Caco-2 (cell line): ENCODE measurements at regions of chr19 and their contacts with region 1.

Region 1: DNA sequence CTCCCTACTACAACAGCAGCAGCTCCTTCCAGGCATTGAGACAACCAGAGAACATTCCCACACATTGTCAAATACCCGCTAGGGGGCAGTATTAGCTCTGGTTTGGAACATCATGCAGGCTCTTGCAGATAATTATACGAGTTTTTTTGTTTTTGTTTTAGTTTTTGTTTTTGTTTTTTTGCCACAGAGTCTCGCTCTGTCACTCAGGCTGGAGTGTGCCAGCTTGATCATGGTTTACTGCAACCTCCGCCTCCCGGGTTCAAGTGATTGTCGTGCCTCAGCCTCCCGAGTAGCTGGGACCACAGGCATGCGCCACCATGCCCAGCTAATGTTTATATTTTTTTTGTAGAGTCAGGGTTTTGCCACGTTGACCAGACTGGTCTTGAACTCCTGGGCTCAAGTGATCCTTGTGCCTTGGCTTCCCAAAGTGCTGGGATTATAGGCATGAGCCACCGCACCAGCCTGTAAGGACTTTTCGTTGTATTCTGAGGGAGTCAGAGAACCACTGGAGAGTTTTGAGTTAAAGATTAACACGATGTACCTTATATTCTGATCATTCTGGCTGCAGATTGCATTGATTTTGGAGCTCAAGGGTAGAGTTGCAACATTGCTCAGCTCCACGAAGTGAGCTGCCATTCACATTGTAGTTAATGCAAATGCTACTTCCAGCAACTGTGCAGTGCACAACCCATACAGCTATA is 41.7 kb upstream of the CEACAM20 start:
- DNase-seq: peak; percentile 73 to 83
- H3K4me3 ChIP-seq: no peak overlapping the region
- H3K4me3 Mint-ChIP-seq: no peak overlapping the region
- H3K27ac Mint-ChIP-seq: no peak overlapping the region
- H3K4me1 ChIP-seq: peaks cover 40% of the 10 kb centered on the region
- H3K4me1 Mint-ChIP-seq: peaks cover 43% of the 10 kb centered on the region
- H3K27me3 ChIP-seq: no peaks in the 10 kb centered on the region
- H3K27me3 Mint-ChIP-seq: no peaks in the 10 kb centered on the region
- CTCF ChIP-seq: peak; percentile 57 to 70

Region 2: DNA sequence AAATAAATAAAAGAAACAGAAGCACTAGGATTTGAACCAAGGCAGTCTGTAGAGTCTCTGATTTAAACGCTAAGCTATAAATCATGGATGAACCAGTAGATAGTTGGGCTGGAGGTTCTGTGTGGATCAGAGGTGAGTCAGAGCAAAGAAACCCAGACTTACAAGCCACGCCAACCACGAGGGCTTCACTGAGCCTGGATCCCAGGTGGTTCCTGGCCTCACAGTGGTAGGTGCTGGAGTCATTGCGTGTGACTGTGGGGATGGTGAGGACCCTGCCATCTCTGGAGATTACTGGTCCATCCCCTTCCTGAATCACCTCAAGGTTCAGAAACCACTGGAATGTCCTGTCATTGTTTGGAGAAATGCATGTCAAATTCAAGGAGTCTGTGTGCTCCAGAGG is 22.4 kb before region 1 on chr19:
- CTCF ChIA-PET with region 1: no interaction called
- POLR2A ChIA-PET with region 1: no interaction called
- intact Hi-C with region 1: no loop called
- DNase-seq: no peak
- H3K4me3 ChIP-seq: no peak overlapping the region
- H3K4me3 Mint-ChIP-seq: no peak overlapping the region
- H3K27ac Mint-ChIP-seq: no peak overlapping the region
- H3K4me1 ChIP-seq: no peaks in the 10 kb centered on the region
- H3K4me1 Mint-ChIP-seq: peaks cover 19% of the 10 kb centered on the region
- H3K27me3 ChIP-seq: no peaks in the 10 kb centered on the region
- H3K27me3 Mint-ChIP-seq: no peaks in the 10 kb centered on the region
- CTCF ChIP-seq: no peak

Region 3: GRCh38 chr19:44582581-44583265 is 11.6 kb after region 1 on chr19:
- CTCF ChIA-PET with region 1: interaction called, 20 read pairs
- POLR2A ChIA-PET with region 1: no interaction called
- intact Hi-C with region 1: no loop called
- DNase-seq: no peak
- H3K4me3 ChIP-seq: no peak overlapping the region
- H3K4me3 Mint-ChIP-seq: no peak overlapping the region
- H3K27ac Mint-ChIP-seq: no peak overlapping the region
- H3K4me1 ChIP-seq: peaks cover 7% of the 10 kb centered on the region
- H3K4me1 Mint-ChIP-seq: peaks cover 30% of the 10 kb centered on the region
- H3K27me3 ChIP-seq: no peaks in the 10 kb centered on the region
- H3K27me3 Mint-ChIP-seq: no peaks in the 10 kb centered on the region
- CTCF ChIP-seq: peak in 1 of 2 experiments; percentile 53

Region 4: DNA sequence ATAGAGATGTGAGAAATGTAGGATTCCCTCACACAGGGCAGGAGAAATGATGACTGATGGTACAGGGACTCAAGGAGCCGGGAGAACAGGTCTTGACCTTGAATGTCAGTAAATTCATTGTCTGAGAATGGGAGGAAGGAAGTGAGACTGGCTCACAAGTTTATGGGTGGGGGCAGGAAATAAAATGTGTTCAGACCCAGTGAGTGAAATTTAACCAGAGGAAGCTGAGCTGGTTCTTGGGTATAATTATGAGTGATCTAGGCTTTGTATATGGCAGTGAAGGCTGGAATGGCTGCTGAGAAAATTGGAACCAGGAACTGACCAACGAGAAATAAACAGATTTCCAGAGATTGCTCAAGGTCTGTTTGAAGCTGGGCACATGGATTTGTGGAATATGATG is 35.9 kb after region 1 on chr19:
- CTCF ChIA-PET with region 1: interaction called, 16 read pairs
- POLR2A ChIA-PET with region 1: no interaction called
- intact Hi-C with region 1: loop called (anchors 5 kb)
- DNase-seq: no peak
- H3K4me3 ChIP-seq: no peak overlapping the region
- H3K4me3 Mint-ChIP-seq: no peak overlapping the region
- H3K27ac Mint-ChIP-seq: no peak overlapping the region
- H3K4me1 ChIP-seq: peaks cover 38% of the 10 kb centered on the region
- H3K4me1 Mint-ChIP-seq: peaks cover 36% of the 10 kb centered on the region
- H3K27me3 ChIP-seq: no peaks in the 10 kb centered on the region
- H3K27me3 Mint-ChIP-seq: no peaks in the 10 kb centered on the region
- CTCF ChIP-seq: no peak

Region 5: DNA sequence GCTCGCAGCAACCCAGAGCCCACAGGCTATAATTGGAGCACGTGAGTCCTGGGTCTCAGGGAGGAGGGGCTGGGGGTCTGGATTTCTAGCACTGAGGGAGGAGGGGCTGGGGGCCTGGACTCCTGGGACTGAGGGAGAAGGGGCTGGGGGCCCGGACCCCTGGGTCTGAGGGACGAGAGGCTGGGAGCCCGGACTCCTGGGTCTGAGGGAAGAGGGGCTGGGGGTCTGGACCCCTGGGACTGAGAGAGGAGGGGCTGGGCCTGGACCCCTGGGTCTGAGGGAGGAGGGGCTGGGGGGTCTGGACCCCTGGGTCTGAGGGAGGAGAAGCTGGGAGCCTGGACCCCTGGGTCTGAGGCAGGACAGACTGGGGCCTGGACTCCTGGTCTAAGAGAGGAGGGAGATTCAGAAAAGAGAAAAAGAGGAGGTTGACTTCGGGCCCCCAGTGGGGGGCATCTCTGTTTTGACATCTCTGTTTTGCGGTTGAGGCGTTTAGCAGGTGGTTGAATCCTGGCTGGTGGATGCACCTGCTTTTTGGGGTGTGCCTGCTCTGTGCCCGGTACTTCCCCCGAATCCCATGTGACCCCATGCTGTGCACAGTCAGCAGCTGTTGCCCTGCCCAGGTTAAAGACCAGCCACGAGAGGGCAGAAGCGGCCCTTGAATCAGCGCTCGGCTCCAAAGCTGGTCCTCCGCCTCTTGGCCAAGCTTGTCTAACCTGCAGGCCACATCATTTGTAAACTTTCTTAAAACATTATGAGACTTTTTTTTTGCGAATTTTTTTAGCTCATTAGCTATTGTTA is 83.0 kb after region 1 on chr19:
- CTCF ChIA-PET with region 1: interaction called, 34 read pairs
- POLR2A ChIA-PET with region 1: interaction called, 3 read pairs
- intact Hi-C with region 1: no loop called
- DNase-seq: peak in 1 of 2 experiments; percentile 54
- H3K4me3 ChIP-seq: no peak overlapping the region
- H3K4me3 Mint-ChIP-seq: no peak overlapping the region
- H3K27ac Mint-ChIP-seq: peak overlapping the region; percentile 31
- H3K4me1 ChIP-seq: no peaks in the 10 kb centered on the region
- H3K4me1 Mint-ChIP-seq: peaks cover 29% of the 10 kb centered on the region
- H3K27me3 ChIP-seq: no peaks in the 10 kb centered on the region
- H3K27me3 Mint-ChIP-seq: no peaks in the 10 kb centered on the region
- CTCF ChIP-seq: peak; percentile 20 to 58

Region 6: GRCh38 chr19:44723952-44724319 is 152.8 kb after region 1 on chr19:
- CTCF ChIA-PET with region 1: interaction called, 11 read pairs
- POLR2A ChIA-PET with region 1: no interaction called
- intact Hi-C with region 1: no loop called
- DNase-seq: peak; percentile 87 to 91
- H3K4me3 ChIP-seq: peak overlapping the region; percentile 15
- H3K4me3 Mint-ChIP-seq: peak overlapping the region; percentile 62
- H3K27ac Mint-ChIP-seq: peak overlapping the region; percentile 43
- H3K4me1 ChIP-seq: peaks cover 53% of the 10 kb centered on the region
- H3K4me1 Mint-ChIP-seq: peaks cover 47% of the 10 kb centered on the region
- H3K27me3 ChIP-seq: no peaks in the 10 kb centered on the region
- H3K27me3 Mint-ChIP-seq: no peaks in the 10 kb centered on the region
- CTCF ChIP-seq: peak; percentile 97 to 98